Endothelial cell of umbilical vein (primary cell): ENCODE measurements at regions of chr2 and their contacts with region 1.

Region 1: GRCh38 chr2:200713003-200713703 is 98.6 kb upstream of the BZW1 start:
- DNase-seq: peak; percentile 92
- H3K4me3 ChIP-seq: peak overlapping the region in 2 of 3 experiments; percentile 4 to 34
- H3K27ac ChIP-seq: peak overlapping the region; percentile 51
- H3K4me1 ChIP-seq: peaks cover 5% of the 10 kb centered on the region
- H3K27me3 ChIP-seq: no peaks in the 10 kb centered on the region
- CTCF ChIP-seq: peak; percentile 71 to 79
- POLR2A ChIP-seq: peak; percentile 69

Region 2: GRCh38 chr2:199366406-199366805 is 1346.7 kb before region 1 on chr2:
- CTCF ChIA-PET with region 1: no interaction called
- POLR2A ChIA-PET with region 1: no interaction called
- dilution Hi-C with region 1: no loop called
- intact Hi-C with region 1: no loop called
- DNase-seq: no peak
- H3K4me3 ChIP-seq: no peak overlapping the region
- H3K27ac ChIP-seq: no peak overlapping the region
- H3K4me1 ChIP-seq: no peaks in the 10 kb centered on the region
- H3K27me3 ChIP-seq: no peaks in the 10 kb centered on the region
- CTCF ChIP-seq: no peak
- POLR2A ChIP-seq: no peak

Region 3: GRCh38 chr2:200525882-200526651 is 187.1 kb before region 1 on chr2 and contains the start of gene SGO2:
- CTCF ChIA-PET with region 1: no interaction called
- POLR2A ChIA-PET with region 1: no interaction called
- dilution Hi-C with region 1: no loop called
- intact Hi-C with region 1: no loop called
- DNase-seq: peak; percentile 95
- H3K4me3 ChIP-seq: peak within 1 kb of the TSS; percentile 66 to 83 (median 67)
- H3K27ac ChIP-seq: peak within 1 kb of the TSS; percentile 8
- H3K4me1 ChIP-seq: peaks cover 8% of the 10 kb centered on the region
- H3K27me3 ChIP-seq: peaks cover 17 to 19% of the 10 kb centered on the region in 2 experiments
- CTCF ChIP-seq: no peak
- POLR2A ChIP-seq: peak; percentile 90
- total RNA-seq, gene SGO2: 19.7 and 20.5 TPM in 2 replicates

Region 4: DNA sequence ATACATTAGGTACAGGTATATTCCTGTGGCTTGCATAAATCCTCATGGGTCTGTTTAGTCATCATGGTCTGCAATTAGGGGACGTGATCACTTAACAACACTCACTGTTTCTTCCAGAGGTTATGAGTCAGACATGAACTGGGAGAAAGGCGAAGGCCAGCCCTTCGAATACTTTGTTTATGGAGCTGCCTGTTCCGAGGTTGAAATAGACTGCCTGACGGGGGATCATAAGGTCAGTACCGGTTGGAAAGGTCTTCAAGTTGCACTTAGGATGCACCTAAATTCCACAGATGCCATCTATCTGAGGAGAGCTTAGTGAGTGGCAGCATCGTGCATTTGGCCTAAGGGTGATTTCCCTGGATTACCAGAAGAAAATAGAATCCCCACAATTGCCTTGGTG is 50.4 kb before region 1 on chr2:
- CTCF ChIA-PET with region 1: no interaction called
- POLR2A ChIA-PET with region 1: no interaction called
- dilution Hi-C with region 1: no loop called
- intact Hi-C with region 1: no loop called
- DNase-seq: no peak
- H3K4me3 ChIP-seq: no peak overlapping the region
- H3K27ac ChIP-seq: no peak overlapping the region
- H3K4me1 ChIP-seq: no peaks in the 10 kb centered on the region
- H3K27me3 ChIP-seq: peaks cover 3 to 16% of the 10 kb centered on the region in 2 experiments
- CTCF ChIP-seq: no peak
- POLR2A ChIP-seq: no peak

Region 5: DNA sequence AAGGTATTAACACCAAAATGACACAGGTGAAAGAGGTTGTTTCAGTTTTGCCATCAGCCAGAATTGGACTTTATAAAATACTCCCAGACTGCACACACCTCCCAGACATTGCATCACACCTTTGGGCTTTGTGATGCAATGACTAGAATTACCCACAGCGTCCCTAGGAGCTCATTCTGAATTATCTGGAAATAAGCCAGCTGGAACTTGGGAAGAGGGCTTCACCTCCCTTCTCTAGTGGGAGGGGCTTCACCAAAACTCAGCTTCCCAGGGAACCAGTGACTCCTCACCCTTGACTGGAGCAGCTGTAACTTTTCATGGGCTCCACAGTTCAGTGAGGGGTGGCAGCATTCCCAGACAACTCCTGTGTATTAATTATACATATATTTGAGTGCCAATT is 15.5 kb after region 1 on chr2:
- CTCF ChIA-PET with region 1: interaction called, 99 read pairs
- POLR2A ChIA-PET with region 1: no interaction called
- dilution Hi-C with region 1: no loop called
- intact Hi-C with region 1: no loop called
- DNase-seq: no peak
- H3K4me3 ChIP-seq: no peak overlapping the region
- H3K27ac ChIP-seq: no peak overlapping the region
- H3K4me1 ChIP-seq: no peaks in the 10 kb centered on the region
- H3K27me3 ChIP-seq: peaks cover 14 to 28% of the 10 kb centered on the region in 2 experiments
- CTCF ChIP-seq: no peak
- POLR2A ChIP-seq: no peak

Region 6: GRCh38 chr2:200765139-200765951 is 52.2 kb after region 1 on chr2:
- CTCF ChIA-PET with region 1: interaction called, 10 read pairs
- POLR2A ChIA-PET with region 1: no interaction called
- dilution Hi-C with region 1: no loop called
- intact Hi-C with region 1: loop called (anchors 1 kb)
- DNase-seq: peak; percentile 89
- H3K4me3 ChIP-seq: no peak overlapping the region
- H3K27ac ChIP-seq: peak overlapping the region; percentile 93
- H3K4me1 ChIP-seq: peaks cover 51% of the 10 kb centered on the region
- H3K27me3 ChIP-seq: no peaks in the 10 kb centered on the region
- CTCF ChIP-seq: no peak
- POLR2A ChIP-seq: no peak

Region 7: GRCh38 chr2:200828104-200828503 is 115.0 kb after region 1 on chr2:
- CTCF ChIA-PET with region 1: interaction called, 15 read pairs
- POLR2A ChIA-PET with region 1: interaction called, 4 read pairs
- dilution Hi-C with region 1: no loop called
- intact Hi-C with region 1: no loop called
- DNase-seq: no peak
- H3K4me3 ChIP-seq: no peak overlapping the region
- H3K27ac ChIP-seq: no peak overlapping the region
- H3K4me1 ChIP-seq: no peaks in the 10 kb centered on the region
- H3K27me3 ChIP-seq: peaks cover 0 to 2% of the 10 kb centered on the region in 2 experiments
- CTCF ChIP-seq: no peak
- POLR2A ChIP-seq: no peak

Region 8: GRCh38 chr2:200888704-200889625 is 175.8 kb after region 1 on chr2 and contains the starts of genes NIF3L1 and PPIL3:
- CTCF ChIA-PET with region 1: interaction called, 5 read pairs
- POLR2A ChIA-PET with region 1: no interaction called
- dilution Hi-C with region 1: no loop called
- intact Hi-C with region 1: loop called (anchors 1 kb)
- DNase-seq: peak; percentile 96
- H3K4me3 ChIP-seq: peak within 1 kb of the TSS; percentile 24 to 76 (median 63)
- H3K27ac ChIP-seq: peak within 1 kb of the TSS; percentile 91
- H3K4me1 ChIP-seq: peaks cover 13% of the 10 kb centered on the region
- H3K27me3 ChIP-seq: no peaks in the 10 kb centered on the region
- CTCF ChIP-seq: peak in 1 of 2 donors; percentile 11
- POLR2A ChIP-seq: peak; percentile 82
- total RNA-seq, gene NIF3L1: 14.9 and 16.3 TPM in 2 replicates
- total RNA-seq, gene PPIL3: 25.0 and 28.7 TPM in 2 replicates

Region 9: GRCh38 chr2:201118121-201118960 is 405.2 kb after region 1 on chr2:
- CTCF ChIA-PET with region 1: no interaction called
- POLR2A ChIA-PET with region 1: no interaction called
- dilution Hi-C with region 1: no loop called
- intact Hi-C with region 1: loop called (anchors 5 kb)
- DNase-seq: peak; percentile 90
- H3K4me3 ChIP-seq: peak overlapping the region; percentile 77 to 99 (median 77)
- H3K27ac ChIP-seq: peak overlapping the region; percentile 88
- H3K4me1 ChIP-seq: peaks cover 60% of the 10 kb centered on the region
- H3K27me3 ChIP-seq: no peaks in the 10 kb centered on the region
- CTCF ChIP-seq: peak; percentile 20 to 66
- POLR2A ChIP-seq: peak; percentile 67

Region 10: DNA sequence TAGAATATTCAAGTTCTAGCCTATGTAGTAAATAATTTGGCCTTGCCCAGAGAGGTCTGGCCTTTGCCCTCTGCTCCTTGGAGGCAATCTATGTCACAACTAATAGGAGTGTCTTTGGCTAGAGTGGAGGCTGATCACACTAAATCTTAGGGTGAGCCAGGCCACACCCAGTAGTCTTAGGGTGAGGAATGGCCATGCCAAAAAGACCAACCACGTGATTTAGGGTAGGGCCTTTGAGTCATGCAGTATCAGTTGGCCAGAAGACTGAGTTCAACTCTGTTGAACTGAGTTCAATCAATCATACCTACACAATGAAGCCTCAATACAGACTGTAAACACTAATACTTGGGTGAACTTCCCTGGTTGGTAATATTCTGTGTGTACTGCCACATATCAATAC is 670.0 kb after region 1 on chr2:
- CTCF ChIA-PET with region 1: no interaction called
- POLR2A ChIA-PET with region 1: no interaction called
- dilution Hi-C with region 1: no loop called
- intact Hi-C with region 1: no loop called
- DNase-seq: no peak
- H3K4me3 ChIP-seq: no peak overlapping the region
- H3K27ac ChIP-seq: no peak overlapping the region
- H3K4me1 ChIP-seq: no peaks in the 10 kb centered on the region
- H3K27me3 ChIP-seq: no peaks in the 10 kb centered on the region
- CTCF ChIP-seq: no peak
- POLR2A ChIP-seq: no peak